Motor neuron (in vitro differentiated cells): ENCODE measurements at regions of chr15 and their contacts with region 1.

Region 1: DNA sequence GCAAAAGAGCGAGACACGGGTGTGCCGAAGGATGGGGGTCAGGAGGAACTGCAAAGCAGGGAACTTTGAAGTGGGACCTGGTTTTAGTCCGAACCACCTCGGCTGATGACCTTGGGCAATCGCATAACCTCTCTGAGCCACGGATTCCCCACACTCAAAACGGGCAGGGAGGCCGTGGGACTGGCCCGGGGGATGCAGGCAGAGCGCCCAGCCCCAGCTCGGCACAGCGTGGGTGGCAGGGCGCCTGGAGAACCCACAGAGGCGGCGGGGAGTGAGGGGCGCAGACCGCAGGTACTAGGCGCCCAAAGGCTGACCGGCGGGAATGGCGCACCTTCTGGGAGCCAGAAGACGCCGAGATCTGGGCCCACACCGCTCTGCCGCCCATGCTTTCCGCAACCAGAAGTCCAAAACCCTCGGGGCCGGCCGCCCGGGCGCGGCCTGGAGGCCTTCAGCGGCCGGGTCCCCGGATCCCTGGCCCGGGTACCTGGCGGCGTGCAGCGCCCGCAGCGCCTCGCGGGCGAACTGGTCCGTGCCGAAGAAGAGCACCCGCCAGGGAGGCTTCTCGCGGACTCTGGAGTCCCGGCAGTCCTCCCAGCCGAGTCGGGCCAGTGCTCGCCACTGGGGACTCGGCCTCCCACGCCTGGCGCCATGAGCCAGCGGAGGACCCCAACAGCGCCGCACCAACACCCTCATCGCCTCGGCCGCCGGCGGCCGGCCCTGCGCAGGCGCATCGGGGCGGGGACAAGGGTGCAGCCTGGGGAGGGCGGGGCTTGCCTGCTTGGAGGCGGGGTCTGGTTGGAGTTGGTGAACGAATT is at the start of gene MTFMT:
- ATAC-seq: peak; percentile 75 to 95 (median 90)
- H3K4me3 ChIP-seq: peak within 1 kb of the TSS; percentile 82 to 100 (median 88)
- H3K27ac ChIP-seq: peak within 1 kb of the TSS in 1 of 2 donors; percentile 52
- H3K4me1 ChIP-seq: peaks cover 13 to 18% of the 10 kb centered on the region in 2 donors
- total RNA-seq, gene MTFMT: 7.9 to 23.5 (median 10.4) TPM

Region 2: GRCh38 chr15:65286704-65287519 is 257.8 kb after region 1 on chr15 and contains the start of gene PARP16:
- in situ Hi-C with region 1: loop called in 1 of 9 experiments (anchors 25 kb)
- ATAC-seq: peak; percentile 88 to 96 (median 90)
- H3K4me3 ChIP-seq: peak within 1 kb of the TSS; percentile 36 to 64 (median 53)
- H3K27ac ChIP-seq: peak within 1 kb of the TSS; percentile 87 to 95
- H3K4me1 ChIP-seq: peaks cover 19 to 20% of the 10 kb centered on the region in 2 donors
- total RNA-seq, gene PARP16: 2.7 to 15.3 (median 6.7) TPM